ENCODE measurements at regions of chr22 and their contacts with region 1.

Region 1: GRCh38 chr22:38135133-38135751 is 24.8 kb upstream of the BAIAP2L2 start:
- DNase-seq: peak; percentile 94
- H3K4me3 ChIP-seq: no peak overlapping the region
- H3K27ac ChIP-seq: peak overlapping the region; percentile 73
- H3K4me1 ChIP-seq: peaks cover 16% of the 10 kb centered on the region
- H3K27me3 ChIP-seq: no peaks in the 10 kb centered on the region
- CTCF ChIP-seq: no peak

Region 2: GRCh38 chr22:37716708-37717107 is 418.5 kb before region 1 on chr22:
- CTCF ChIA-PET with region 1: no interaction called
- dilution Hi-C with region 1: no loop called
- in situ Hi-C with region 1: no loop called
- intact Hi-C with region 1: no loop called
- DNase-seq: peak; percentile 80
- H3K4me3 ChIP-seq: peak overlapping the region in 1 of 3 experiments; percentile 15
- H3K27ac ChIP-seq: peak overlapping the region; percentile 47
- H3K4me1 ChIP-seq: peaks cover 6% of the 10 kb centered on the region
- H3K27me3 ChIP-seq: no peaks in the 10 kb centered on the region
- CTCF ChIP-seq: no peak

Region 3: GRCh38 chr22:37933711-37934376 is 201.4 kb before region 1 on chr22:
- CTCF ChIA-PET with region 1: no interaction called
- dilution Hi-C with region 1: no loop called
- in situ Hi-C with region 1: no loop called
- intact Hi-C with region 1: no loop called
- DNase-seq: peak; percentile 90
- H3K4me3 ChIP-seq: no peak overlapping the region
- H3K27ac ChIP-seq: no peak overlapping the region
- H3K4me1 ChIP-seq: peaks cover 24% of the 10 kb centered on the region
- H3K27me3 ChIP-seq: no peaks in the 10 kb centered on the region
- CTCF ChIP-seq: peak; percentile 91 to 99

Region 4: GRCh38 chr22:38124236-38124974 is 10.8 kb before region 1 on chr22:
- CTCF ChIA-PET with region 1: no interaction called
- dilution Hi-C with region 1: no loop called
- in situ Hi-C with region 1: no loop called
- intact Hi-C with region 1: loop called (anchors 1 kb)
- DNase-seq: peak; percentile 93
- H3K4me3 ChIP-seq: no peak overlapping the region
- H3K27ac ChIP-seq: no peak overlapping the region
- H3K4me1 ChIP-seq: peaks cover 26% of the 10 kb centered on the region
- H3K27me3 ChIP-seq: no peaks in the 10 kb centered on the region
- CTCF ChIP-seq: peak; percentile 4 to 31

Measured in mammary epithelial cell (primary cell).